Heart left ventricle (tissue), 16 donors: ENCODE measurements at regions of chr12 and their contacts with region 1.

Region 1: DNA sequence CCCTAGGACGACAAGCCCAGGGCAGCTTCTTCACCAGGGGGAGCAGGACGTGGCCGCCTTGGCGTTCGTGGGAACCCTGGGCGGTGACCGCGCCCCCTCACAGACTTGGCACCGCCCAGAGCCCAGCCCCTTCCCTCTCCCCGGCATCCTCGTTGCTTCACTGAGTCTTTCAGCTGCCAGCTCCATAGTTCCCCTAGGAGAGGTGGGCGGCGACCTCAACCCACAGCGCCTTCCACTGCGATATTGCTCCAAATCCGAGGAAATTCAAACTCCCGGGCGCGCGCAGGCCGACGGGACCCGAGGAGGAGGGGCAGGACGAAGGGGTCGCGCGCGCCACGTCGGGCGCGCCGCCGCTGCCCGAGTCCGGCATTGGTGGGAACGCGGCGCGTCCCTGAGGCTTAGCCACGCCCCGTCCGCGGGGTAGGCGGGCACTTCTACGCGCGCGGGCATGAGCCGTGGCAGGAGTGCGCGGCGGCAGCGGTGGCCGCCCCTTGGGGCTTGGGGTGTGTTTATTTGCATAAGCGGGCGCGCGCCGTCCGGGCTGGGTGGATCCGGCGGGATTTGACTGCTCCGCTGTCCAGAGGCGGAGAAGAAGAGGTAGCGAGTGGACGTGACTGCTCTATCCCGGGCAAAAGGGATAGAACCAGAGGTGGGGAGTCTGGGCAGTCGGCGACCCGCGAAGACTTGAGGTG is at the starts of genes APAF1 and IKBIP:
- DNase-seq: peak; percentile 97 to 99 (median 98)
- ATAC-seq: peak; percentile 98 to 99 (median 99)
- H3K4me3 ChIP-seq: peak within 1 kb of the TSS; percentile 75 to 98 (median 92)
- H3K27ac ChIP-seq: peak within 1 kb of the TSS; percentile 55 to 93 (median 89)
- H3K4me1 ChIP-seq: peaks cover 0 to 35% (median 19%) of the 10 kb centered on the region in 12 donors
- H3K27me3 ChIP-seq: no peaks in the 10 kb centered on the region
- CTCF ChIP-seq: peak in 2 of 12 donors; percentile 3 to 6
- POLR2A ChIP-seq: peak in 1 of 2 donors; percentile 80
- total RNA-seq, gene APAF1: 2.9 to 11.6 (median 3.8) TPM
- total RNA-seq, gene IKBIP: 3.6 to 16.5 (median 4.8) TPM

Region 2: DNA sequence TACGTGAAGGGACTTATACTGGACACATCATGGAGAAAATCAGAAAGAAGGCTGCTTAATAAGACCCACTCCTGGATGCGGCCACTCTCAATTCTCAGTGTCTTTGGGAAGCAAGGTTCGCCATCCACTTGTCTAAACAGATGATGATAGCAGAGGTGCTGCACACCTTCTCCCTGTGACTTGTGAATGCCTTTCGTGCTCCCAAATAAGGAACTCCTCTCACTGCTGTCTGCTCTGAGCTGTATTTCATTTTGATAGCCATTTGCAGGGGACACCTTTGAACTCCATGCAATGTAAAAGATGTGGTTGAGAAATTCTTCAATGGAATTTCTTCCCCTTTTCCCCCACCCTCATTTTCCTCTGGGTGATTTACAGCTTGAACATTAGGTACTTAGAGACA is 1170.7 kb before region 1 on chr12:
- intact Hi-C with region 1: loop called in 1 of 10 experiments (anchors 10 kb)
- DNase-seq: no peak
- ATAC-seq: no peak
- H3K4me3 ChIP-seq: peak overlapping the region in 7 of 12 donors; percentile 4 to 37 (median 13)
- H3K27ac ChIP-seq: peak overlapping the region in 6 of 12 donors; percentile 23 to 66 (median 38)
- H3K4me1 ChIP-seq: no peaks in the 10 kb centered on the region
- H3K27me3 ChIP-seq: no peaks in the 10 kb centered on the region
- CTCF ChIP-seq: no peak
- POLR2A ChIP-seq: no peak

Region 3: GRCh38 chr12:98572010-98572409 is 72.8 kb before region 1 on chr12:
- intact Hi-C with region 1: loop called in 9 of 10 experiments (anchors 2 to 5 kb)
- DNase-seq: no peak
- ATAC-seq: no peak
- H3K4me3 ChIP-seq: no peak overlapping the region
- H3K27ac ChIP-seq: no peak overlapping the region
- H3K4me1 ChIP-seq: peaks cover 0 to 3% (median 0%) of the 10 kb centered on the region in 12 donors
- H3K27me3 ChIP-seq: no peaks in the 10 kb centered on the region
- CTCF ChIP-seq: peak in 3 of 12 donors; percentile 10 to 19 (median 16)
- POLR2A ChIP-seq: no peak

Region 4: GRCh38 chr12:98593351-98594049 is 51.4 kb before region 1 on chr12 and contains the start of gene SLC25A3:
- intact Hi-C with region 1: loop called in 9 of 10 experiments (anchors 1 to 10 kb)
- DNase-seq: peak; percentile 97 to 99 (median 98)
- ATAC-seq: peak; percentile 99
- H3K4me3 ChIP-seq: peak within 1 kb of the TSS; percentile 58 to 98 (median 90)
- H3K27ac ChIP-seq: peak within 1 kb of the TSS; percentile 97 to 100 (median 99)
- H3K4me1 ChIP-seq: peaks cover 0 to 36% (median 23%) of the 10 kb centered on the region in 12 donors
- H3K27me3 ChIP-seq: no peaks in the 10 kb centered on the region
- CTCF ChIP-seq: no peak
- POLR2A ChIP-seq: peak; percentile 81 to 99
- total RNA-seq, gene SLC25A3: 852 to 2,779 (median 1,586) TPM